A673 (cell line): ENCODE measurements at regions of chr10 and their contacts with region 1.

Region 1: DNA sequence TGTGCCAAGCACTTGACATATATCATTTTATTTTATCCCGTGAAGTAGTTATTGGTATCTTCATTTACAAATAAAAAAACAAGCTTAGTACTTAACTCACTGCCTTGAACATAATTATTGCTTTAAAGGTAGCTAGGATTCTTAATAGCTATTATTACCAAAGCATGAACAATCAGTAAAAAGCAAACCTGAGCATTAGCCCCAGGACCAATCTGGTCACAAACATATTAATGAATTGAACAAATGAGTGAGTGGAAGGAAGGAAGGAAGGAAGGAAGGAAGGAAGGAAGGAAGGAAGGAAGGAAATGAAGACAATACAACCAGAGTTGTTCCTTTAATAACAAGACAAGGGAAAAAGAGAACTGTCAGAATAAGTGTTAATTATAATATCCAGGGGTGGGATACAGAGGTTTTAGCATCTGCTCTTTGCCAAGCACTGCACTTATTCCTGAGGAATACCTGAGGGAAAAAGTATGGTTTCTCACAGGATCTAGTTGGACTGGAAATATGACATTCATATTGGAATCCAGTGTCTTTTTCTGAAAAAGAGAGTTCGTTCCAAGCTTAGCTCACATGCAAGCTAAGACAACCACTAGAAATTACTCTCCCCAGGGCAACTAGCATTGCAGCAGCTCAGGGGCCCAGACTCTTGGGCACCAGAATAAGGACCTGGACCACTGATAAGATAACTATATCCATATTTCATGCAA is 172.9 kb upstream of the MGMT start:
- DNase-seq: peak; percentile 96
- H3K4me3 ChIP-seq: no peak overlapping the region
- H3K27ac ChIP-seq: peak overlapping the region; percentile 98
- H3K4me1 ChIP-seq: peaks cover 59% of the 10 kb centered on the region
- H3K27me3 ChIP-seq: no peaks in the 10 kb centered on the region
- CTCF ChIP-seq: no peak

Region 2: DNA sequence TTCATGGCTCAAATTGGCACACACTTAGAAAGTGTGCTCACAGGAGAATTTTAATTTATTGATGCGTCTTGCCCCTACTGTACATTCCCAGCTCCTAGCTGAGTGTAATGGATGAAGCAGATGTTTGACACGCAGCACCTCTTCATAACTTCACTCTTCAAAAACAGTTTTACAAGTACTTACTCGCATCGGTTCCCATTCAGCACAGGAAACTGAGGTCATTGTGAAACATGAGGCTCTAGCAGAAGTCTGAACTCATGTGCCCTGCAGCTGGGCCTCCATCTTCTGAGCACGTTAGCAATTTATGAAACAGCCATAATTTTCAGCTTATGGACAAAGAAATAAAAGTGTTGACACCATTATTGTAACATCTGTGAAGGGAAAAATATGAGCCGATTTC is 386.0 kb before region 1 on chr10:
- CTCF ChIA-PET with region 1: no interaction called
- POLR2A ChIA-PET with region 1: no interaction called
- intact Hi-C with region 1: no loop called
- DNase-seq: peak; percentile 20
- H3K4me3 ChIP-seq: no peak overlapping the region
- H3K27ac ChIP-seq: no peak overlapping the region
- H3K4me1 ChIP-seq: peaks cover 9% of the 10 kb centered on the region
- H3K27me3 ChIP-seq: no peaks in the 10 kb centered on the region
- CTCF ChIP-seq: no peak

Region 3: GRCh38 chr10:129030996-129031843 is 262.9 kb before region 1 on chr10:
- CTCF ChIA-PET with region 1: interaction called, 4 read pairs
- POLR2A ChIA-PET with region 1: interaction called, 21 read pairs
- intact Hi-C with region 1: loop called (anchors 1 kb)
- DNase-seq: peak; percentile 91
- H3K4me3 ChIP-seq: peak overlapping the region; percentile 40
- H3K27ac ChIP-seq: peak overlapping the region; percentile 92
- H3K4me1 ChIP-seq: peaks cover 86% of the 10 kb centered on the region
- H3K27me3 ChIP-seq: no peaks in the 10 kb centered on the region
- CTCF ChIP-seq: peak; percentile 98

Region 4: DNA sequence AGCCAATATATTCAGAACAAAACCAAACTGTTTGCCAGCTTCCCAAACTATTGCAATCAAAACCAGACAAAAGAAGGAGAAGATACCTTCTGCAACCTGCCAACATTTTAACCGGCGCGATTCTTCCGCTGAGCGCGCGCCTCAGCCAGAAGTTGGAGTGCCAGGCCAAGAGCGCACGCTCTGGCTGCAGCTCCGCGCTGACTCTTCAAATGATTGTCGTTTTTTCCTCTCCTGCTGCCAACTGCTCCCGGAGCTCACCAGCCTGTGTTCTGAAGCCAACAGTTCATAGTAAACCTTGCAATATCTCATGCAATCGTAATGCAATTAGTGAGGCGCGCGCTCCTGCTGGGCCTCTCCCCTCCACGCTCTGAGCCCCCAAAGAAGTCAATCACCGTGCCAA is 86.8 kb before region 1 on chr10:
- CTCF ChIA-PET with region 1: no interaction called
- POLR2A ChIA-PET with region 1: no interaction called
- intact Hi-C with region 1: no loop called
- DNase-seq: no peak
- H3K4me3 ChIP-seq: no peak overlapping the region
- H3K27ac ChIP-seq: no peak overlapping the region
- H3K4me1 ChIP-seq: no peaks in the 10 kb centered on the region
- H3K27me3 ChIP-seq: no peaks in the 10 kb centered on the region
- CTCF ChIP-seq: no peak

Region 5: GRCh38 chr10:129305046-129305445 is 10.9 kb after region 1 on chr10:
- CTCF ChIA-PET with region 1: interaction called, 3 read pairs
- POLR2A ChIA-PET with region 1: interaction called, 15 read pairs
- intact Hi-C with region 1: no loop called
- DNase-seq: peak; percentile 92
- H3K4me3 ChIP-seq: peak overlapping the region; percentile 4
- H3K27ac ChIP-seq: peak overlapping the region; percentile 92
- H3K4me1 ChIP-seq: peaks cover 55% of the 10 kb centered on the region
- H3K27me3 ChIP-seq: no peaks in the 10 kb centered on the region
- CTCF ChIP-seq: no peak

Region 6: GRCh38 chr10:129343141-129343540 is 49.0 kb after region 1 on chr10:
- CTCF ChIA-PET with region 1: interaction called, 10 read pairs
- POLR2A ChIA-PET with region 1: no interaction called
- intact Hi-C with region 1: no loop called
- DNase-seq: no peak
- H3K4me3 ChIP-seq: no peak overlapping the region
- H3K27ac ChIP-seq: no peak overlapping the region
- H3K4me1 ChIP-seq: peaks cover 7% of the 10 kb centered on the region
- H3K27me3 ChIP-seq: no peaks in the 10 kb centered on the region
- CTCF ChIP-seq: no peak

Region 7: DNA sequence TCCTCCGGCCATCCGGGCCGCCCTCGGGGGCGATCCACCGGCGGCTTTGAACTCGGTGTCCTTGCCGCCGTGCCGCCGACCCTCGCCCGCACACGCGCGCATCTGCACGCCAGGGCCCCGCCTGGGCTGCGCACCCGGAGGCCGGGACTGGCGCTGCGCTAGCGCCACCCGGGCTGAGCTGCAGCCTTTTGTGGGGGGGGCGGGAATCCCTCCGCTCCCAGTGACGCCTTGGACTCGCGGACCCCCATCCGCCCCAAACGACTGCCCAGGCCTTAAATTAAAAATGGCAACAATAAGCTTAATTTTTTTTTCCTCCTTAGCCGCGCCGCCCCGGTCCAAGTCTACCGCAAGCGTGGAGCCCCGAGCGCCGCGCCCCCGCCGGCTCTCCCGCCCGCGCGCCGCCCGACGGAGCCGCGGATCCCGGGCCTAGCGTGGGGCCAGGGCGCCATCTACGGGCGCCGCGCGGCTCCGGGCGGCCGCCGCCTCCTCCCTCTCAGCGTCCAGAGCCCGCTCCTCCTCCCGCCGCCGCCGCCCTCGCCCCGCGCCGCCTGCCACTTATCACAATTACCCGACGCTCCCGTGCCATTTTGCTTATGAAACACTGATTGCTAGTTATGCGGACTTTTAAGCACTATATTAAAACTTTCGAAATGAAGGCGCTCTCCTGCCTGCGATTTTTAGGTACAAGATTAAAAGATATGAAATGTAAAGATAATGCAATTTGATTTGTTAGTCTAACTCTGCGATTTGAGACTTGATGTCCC is 677.4 kb after region 1 on chr10:
- CTCF ChIA-PET with region 1: interaction called, 3 read pairs
- POLR2A ChIA-PET with region 1: no interaction called
- intact Hi-C with region 1: loop called (anchors 1 kb)
- DNase-seq: peak; percentile 90
- H3K4me3 ChIP-seq: peak overlapping the region; percentile 53
- H3K27ac ChIP-seq: no peak overlapping the region
- H3K4me1 ChIP-seq: peaks cover 19% of the 10 kb centered on the region
- H3K27me3 ChIP-seq: peaks cover 18% of the 10 kb centered on the region
- CTCF ChIP-seq: peak; percentile 43; the same call in 1 of the 2 replicates